CD4-positive, alpha-beta T cell (primary cell): ENCODE measurements at regions of chr5 and their contacts with region 1.

Region 1: DNA sequence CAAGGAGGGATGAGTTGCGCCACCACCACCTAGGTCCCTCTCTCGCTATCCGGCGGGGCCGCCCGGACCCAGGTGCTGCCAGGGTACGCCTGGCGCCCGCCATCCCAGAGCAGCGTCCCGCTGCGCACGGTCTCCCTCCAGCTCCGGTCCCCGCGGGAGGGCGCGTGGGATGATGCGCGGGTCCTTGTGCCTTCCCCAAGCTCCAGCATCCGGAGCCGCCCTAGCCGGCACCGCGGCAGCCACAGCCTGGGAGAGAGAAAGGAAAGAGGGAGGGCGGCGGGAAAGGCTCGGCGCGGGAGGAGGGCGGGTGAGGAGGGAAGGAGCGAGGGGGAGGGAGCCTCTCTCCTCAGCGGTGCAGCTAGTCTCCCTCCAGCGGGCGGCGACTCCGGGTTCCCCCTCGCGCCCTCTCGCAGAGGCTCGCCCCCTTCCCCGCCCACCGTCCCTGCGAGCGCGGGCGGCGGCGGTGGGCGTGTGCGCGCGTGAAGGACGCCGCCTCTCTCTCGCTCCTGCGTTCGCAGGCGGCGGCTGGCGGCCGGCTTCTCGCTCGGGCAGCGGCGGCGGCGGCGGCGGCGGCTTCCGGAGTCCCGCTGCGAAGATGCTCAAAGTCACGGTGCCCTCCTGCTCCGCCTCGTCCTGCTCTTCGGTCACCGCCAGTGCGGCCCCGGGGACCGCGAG is at the start of gene CAMK4:
- DNase-seq: peak; percentile 70 to 95 (median 81)
- ATAC-seq: peak; percentile 83
- H3K4me3 ChIP-seq: peak within 1 kb of the TSS; percentile 96
- H3K4me3 Mint-ChIP-seq: peak within 1 kb of the TSS; percentile 92
- H3K27ac ChIP-seq: peak within 1 kb of the TSS; percentile 72 to 79
- H3K27ac Mint-ChIP-seq: peak within 1 kb of the TSS; percentile 90
- H3K4me1 ChIP-seq: peaks cover 25% of the 10 kb centered on the region
- H3K4me1 Mint-ChIP-seq: peaks cover 35% of the 10 kb centered on the region
- H3K27me3 ChIP-seq: no peaks in the 10 kb centered on the region
- H3K27me3 Mint-ChIP-seq: no peaks in the 10 kb centered on the region
- CTCF ChIP-seq: peak; percentile 31
- total RNA-seq, gene CAMK4: 202 to 225 TPM

Region 2: DNA sequence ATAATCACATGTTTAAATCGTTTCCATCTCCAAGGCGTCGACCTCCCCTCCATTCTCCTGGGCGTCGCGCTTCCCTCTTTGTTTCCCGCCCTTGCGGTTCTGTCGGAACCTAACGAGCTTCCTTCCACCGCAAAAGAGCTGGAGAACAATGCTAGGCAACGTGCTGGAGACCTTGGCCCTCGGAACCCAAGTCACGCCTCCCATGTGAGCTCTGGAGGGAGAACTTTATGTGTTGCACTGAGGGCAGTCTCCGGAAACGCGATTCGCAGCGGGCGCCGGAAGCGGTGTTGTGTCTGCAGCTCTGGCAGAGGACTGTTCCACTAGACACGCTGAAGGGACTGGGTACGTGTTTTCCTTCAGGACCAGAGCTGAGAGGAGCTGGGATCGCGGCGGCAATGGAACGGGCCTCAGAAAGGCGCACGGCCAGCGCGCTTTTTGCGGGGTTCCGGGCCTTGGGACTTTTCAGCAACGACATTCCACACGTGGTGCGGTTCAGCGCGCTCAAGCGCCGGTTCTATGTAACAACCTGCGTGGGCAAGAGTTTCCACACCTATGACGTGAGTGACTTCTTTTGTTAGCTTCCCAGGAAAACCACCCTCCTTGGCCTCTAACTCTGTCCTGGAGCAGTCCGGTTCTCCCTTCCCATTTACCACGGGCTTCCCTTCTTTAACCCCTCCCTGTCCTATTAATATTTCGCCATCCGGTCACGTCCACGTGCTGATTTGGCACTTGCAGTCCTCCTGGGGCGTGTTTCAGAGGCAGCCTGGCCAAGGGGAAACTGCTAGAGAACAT is 131.8 kb before region 1 on chr5 and contains the start of gene WDR36:
- CTCF ChIA-PET with region 1: no interaction called
- POLR2A ChIA-PET with region 1: interaction called, 8 read pairs
- intact Hi-C with region 1: loop called in 1 of 2 experiments (anchors 10 kb)
- DNase-seq: peak; percentile 78 to 93 (median 86)
- ATAC-seq: peak; percentile 93
- H3K4me3 ChIP-seq: peak within 1 kb of the TSS; percentile 89
- H3K4me3 Mint-ChIP-seq: peak within 1 kb of the TSS; percentile 90
- H3K27ac ChIP-seq: peak within 1 kb of the TSS; percentile 68 to 85
- H3K27ac Mint-ChIP-seq: peak within 1 kb of the TSS; percentile 94
- H3K4me1 ChIP-seq: peaks cover 9% of the 10 kb centered on the region
- H3K4me1 Mint-ChIP-seq: peaks cover 41% of the 10 kb centered on the region
- H3K27me3 ChIP-seq: no peaks in the 10 kb centered on the region
- H3K27me3 Mint-ChIP-seq: peaks cover 9% of the 10 kb centered on the region
- CTCF ChIP-seq: no peak
- total RNA-seq, gene WDR36: 22.0 to 22.4 TPM

Region 3: GRCh38 chr5:111201705-111202104 is 22.3 kb before region 1 on chr5:
- CTCF ChIA-PET with region 1: interaction called, 10 read pairs
- POLR2A ChIA-PET with region 1: no interaction called
- intact Hi-C with region 1: no loop called
- DNase-seq: no peak
- ATAC-seq: no peak
- H3K4me3 ChIP-seq: no peak overlapping the region
- H3K4me3 Mint-ChIP-seq: no peak overlapping the region
- H3K27ac ChIP-seq: no peak overlapping the region
- H3K27ac Mint-ChIP-seq: no peak overlapping the region
- H3K4me1 ChIP-seq: no peaks in the 10 kb centered on the region
- H3K4me1 Mint-ChIP-seq: peaks cover 15% of the 10 kb centered on the region
- H3K27me3 ChIP-seq: no peaks in the 10 kb centered on the region
- H3K27me3 Mint-ChIP-seq: peaks cover 6% of the 10 kb centered on the region
- CTCF ChIP-seq: no peak

Region 4: GRCh38 chr5:111237470-111237869 is 13.4 kb after region 1 on chr5:
- CTCF ChIA-PET with region 1: interaction called, 42 read pairs
- POLR2A ChIA-PET with region 1: interaction called, 196 read pairs
- intact Hi-C with region 1: loop called (anchors 1 to 2 kb)
- DNase-seq: peak in 1 of 14 experiments; percentile 46
- ATAC-seq: no peak
- H3K4me3 ChIP-seq: peak overlapping the region; percentile 9
- H3K4me3 Mint-ChIP-seq: peak overlapping the region; percentile 80
- H3K27ac ChIP-seq: peak overlapping the region; percentile 62 to 75
- H3K27ac Mint-ChIP-seq: peak overlapping the region; percentile 90
- H3K4me1 ChIP-seq: peaks cover 55% of the 10 kb centered on the region
- H3K4me1 Mint-ChIP-seq: peaks cover 97% of the 10 kb centered on the region
- H3K27me3 ChIP-seq: no peaks in the 10 kb centered on the region
- H3K27me3 Mint-ChIP-seq: no peaks in the 10 kb centered on the region
- CTCF ChIP-seq: no peak

Region 5: DNA sequence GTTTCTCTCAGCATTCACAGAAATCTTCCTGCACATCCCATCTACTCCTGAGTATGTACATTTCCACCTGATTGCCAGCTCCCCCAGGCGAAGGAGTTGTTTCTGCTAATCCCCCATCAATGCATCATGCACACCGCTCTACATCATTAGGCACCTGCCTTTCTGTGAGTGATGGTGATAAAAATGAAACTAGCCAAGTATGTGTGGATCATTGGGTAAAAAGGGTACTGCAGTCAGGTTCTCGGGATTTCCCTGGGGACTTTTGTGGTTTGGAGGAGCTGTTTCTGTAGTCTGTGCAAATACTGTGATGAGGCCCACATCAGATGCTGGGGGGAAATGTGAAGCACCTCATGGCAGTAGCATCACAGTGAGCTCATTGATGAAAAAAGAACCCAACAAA is 30.6 kb after region 1 on chr5:
- CTCF ChIA-PET with region 1: interaction called, 36 read pairs
- POLR2A ChIA-PET with region 1: interaction called, 39 read pairs
- intact Hi-C with region 1: loop called (anchors 2 kb)
- DNase-seq: peak in 9 of 14 experiments; percentile 17 to 93 (median 51)
- ATAC-seq: peak; percentile 80
- H3K4me3 ChIP-seq: no peak overlapping the region
- H3K4me3 Mint-ChIP-seq: peak overlapping the region; percentile 72
- H3K27ac ChIP-seq: peak overlapping the region; percentile 62 to 68
- H3K27ac Mint-ChIP-seq: peak overlapping the region; percentile 87
- H3K4me1 ChIP-seq: peaks cover 44% of the 10 kb centered on the region
- H3K4me1 Mint-ChIP-seq: peaks cover 67% of the 10 kb centered on the region
- H3K27me3 ChIP-seq: no peaks in the 10 kb centered on the region
- H3K27me3 Mint-ChIP-seq: no peaks in the 10 kb centered on the region
- CTCF ChIP-seq: no peak

Region 6: GRCh38 chr5:111278845-111279504 is 54.9 kb after region 1 on chr5:
- CTCF ChIA-PET with region 1: interaction called, 53 read pairs
- POLR2A ChIA-PET with region 1: interaction called, 42 read pairs
- intact Hi-C with region 1: loop called (anchors 1 to 2 kb)
- DNase-seq: peak; percentile 79 to 93 (median 86)
- ATAC-seq: peak; percentile 98
- H3K4me3 ChIP-seq: no peak overlapping the region
- H3K4me3 Mint-ChIP-seq: peak overlapping the region; percentile 63
- H3K27ac ChIP-seq: no peak overlapping the region
- H3K27ac Mint-ChIP-seq: peak overlapping the region; percentile 59
- H3K4me1 ChIP-seq: peaks cover 11% of the 10 kb centered on the region
- H3K4me1 Mint-ChIP-seq: peaks cover 87% of the 10 kb centered on the region
- H3K27me3 ChIP-seq: no peaks in the 10 kb centered on the region
- H3K27me3 Mint-ChIP-seq: no peaks in the 10 kb centered on the region
- CTCF ChIP-seq: peak; percentile 85